ENCODE measurements at regions of chr1 and their contacts with region 1.

Region 1: DNA sequence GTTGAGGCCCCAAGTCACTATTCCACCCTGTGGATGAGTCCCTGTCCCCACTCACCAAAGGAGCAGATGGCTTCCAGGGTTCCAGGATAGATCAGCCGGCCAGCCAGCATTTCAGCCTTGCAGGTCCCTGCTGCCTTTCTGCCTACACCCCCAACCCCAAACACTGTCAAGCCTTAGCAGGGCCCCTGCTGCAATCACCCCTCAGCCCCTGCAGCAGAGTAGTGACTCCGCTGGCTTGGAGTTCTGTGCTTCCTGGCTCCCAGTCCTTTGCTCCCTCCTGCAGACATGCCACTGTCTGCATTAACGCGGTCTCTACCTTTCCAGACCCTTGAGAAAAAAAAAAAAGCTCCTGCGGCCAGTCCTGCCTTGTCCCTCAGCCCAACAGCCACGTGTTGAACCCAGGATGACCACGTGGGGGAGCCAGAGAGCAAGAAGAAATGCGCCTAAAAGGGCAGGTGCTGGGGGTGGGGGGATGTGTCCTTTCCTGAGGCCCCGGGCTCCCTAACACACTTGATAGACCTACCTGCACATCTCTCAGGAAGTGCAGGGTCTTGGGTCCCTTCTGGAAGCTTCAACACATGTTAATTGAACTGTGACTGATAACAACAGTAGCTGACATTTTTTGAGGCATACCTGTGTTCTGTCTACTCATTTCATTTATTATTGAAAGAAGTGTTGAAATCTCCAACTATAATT is 37.4 kb downstream of the RASSF5 start:
- DNase-seq: peak; percentile 48
- ATAC-seq: peak; percentile 96
- H3K4me3 ChIP-seq: no peak overlapping the region
- H3K27ac ChIP-seq: no peak overlapping the region
- H3K4me1 ChIP-seq: no peaks in the 10 kb centered on the region
- H3K27me3 ChIP-seq: no peaks in the 10 kb centered on the region; a peak in 1 of 5 replicates
- CTCF ChIP-seq: peak; percentile 86
- EP300 ChIP-seq: no peak
- POLR2A ChIP-seq: no peak
- RAD21 ChIP-seq: peak; percentile 38; the same call in 1 of the 2 replicates

Region 2: DNA sequence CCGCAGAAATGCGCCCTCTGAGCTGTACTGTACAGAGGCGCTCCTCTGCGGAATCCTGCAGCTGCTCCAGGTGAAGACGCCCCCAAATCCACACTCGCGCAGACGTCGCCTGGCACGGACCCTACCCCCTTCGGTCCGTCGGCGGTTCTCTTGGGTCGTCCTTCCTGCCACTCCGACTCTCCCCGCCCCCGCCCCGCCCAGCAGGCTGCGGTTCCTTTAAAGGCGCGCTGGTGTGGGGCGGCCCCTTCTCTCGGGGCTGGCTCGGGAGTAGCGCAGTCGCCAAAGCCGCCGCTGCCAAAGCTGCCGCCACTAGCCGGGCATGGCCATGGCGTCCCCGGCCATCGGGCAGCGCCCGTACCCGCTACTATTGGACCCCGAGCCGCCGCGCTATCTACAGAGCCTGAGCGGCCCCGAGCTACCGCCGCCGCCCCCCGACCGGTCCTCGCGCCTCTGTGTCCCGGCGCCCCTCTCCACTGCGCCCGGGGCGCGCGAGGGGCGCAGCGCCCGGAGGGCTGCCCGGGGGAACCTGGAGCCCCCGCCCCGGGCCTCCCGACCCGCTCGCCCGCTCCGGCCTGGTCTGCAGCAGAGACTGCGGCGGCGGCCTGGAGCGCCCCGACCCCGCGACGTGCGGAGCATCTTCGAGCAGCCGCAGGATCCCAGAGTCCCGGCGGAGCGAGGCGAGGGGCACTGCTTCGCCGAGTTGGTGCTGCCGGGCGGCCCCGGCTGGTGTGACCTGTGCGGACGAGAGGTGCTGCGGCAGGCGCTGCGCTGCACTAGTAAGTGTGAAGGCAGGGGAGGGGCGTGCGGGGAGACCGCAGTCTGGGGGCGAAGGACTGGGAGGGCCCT is 37.2 kb before region 1 on chr1 and contains the start of gene RASSF5:
- CTCF ChIA-PET with region 1: no interaction called
- POLR2A ChIA-PET with region 1: no interaction called
- in situ Hi-C with region 1: loop called (anchors 5 kb)
- intact Hi-C with region 1: no loop called
- DNase-seq: no peak
- ATAC-seq: peak; percentile 59
- H3K4me3 ChIP-seq: peak within 1 kb of the TSS; percentile 46 to 68 (median 55); a peak in 5 of 6 replicates
- H3K27ac ChIP-seq: no peak within 1 kb of the TSS
- H3K4me1 ChIP-seq: peaks cover 59% of the 10 kb centered on the region
- H3K27me3 ChIP-seq: peaks cover 0 to 13% of the 10 kb centered on the region in 2 experiments; a peak in 2 of 5 replicates
- CTCF ChIP-seq: no peak
- EP300 ChIP-seq: no peak
- POLR2A ChIP-seq: no peak; a peak in 1 of 4 replicates
- RAD21 ChIP-seq: no peak
- total RNA-seq, gene RASSF5: 0.18 and 0.49 TPM in 2 replicates

Region 3: GRCh38 chr1:206628916-206629315 is 84.2 kb after region 1 on chr1:
- CTCF ChIA-PET with region 1: no interaction called
- POLR2A ChIA-PET with region 1: no interaction called
- in situ Hi-C with region 1: no loop called
- intact Hi-C with region 1: no loop called
- DNase-seq: no peak
- ATAC-seq: no peak
- H3K4me3 ChIP-seq: no peak overlapping the region
- H3K27ac ChIP-seq: no peak overlapping the region
- H3K4me1 ChIP-seq: peaks cover 7% of the 10 kb centered on the region
- H3K27me3 ChIP-seq: peaks cover 0 to 23% of the 10 kb centered on the region in 2 experiments; a peak in 3 of 5 replicates
- CTCF ChIP-seq: no peak
- EP300 ChIP-seq: no peak
- POLR2A ChIP-seq: no peak
- RAD21 ChIP-seq: no peak

Measured in HepG2 (cell line).